CD8-positive, alpha-beta T cell (primary cell): ENCODE measurements at regions of chr21 and their contacts with region 1.

Region 1: GRCh38 chr21:25240974-25241373 is 366.3 kb downstream of the MRPL39 start:
- DNase-seq: no peak
- ATAC-seq: no peak
- H3K4me3 ChIP-seq: no peak overlapping the region
- H3K4me3 Mint-ChIP-seq: no peak overlapping the region
- H3K27ac ChIP-seq: no peak overlapping the region
- H3K27ac Mint-ChIP-seq: no peak overlapping the region
- H3K4me1 ChIP-seq: no peaks in the 10 kb centered on the region
- H3K4me1 Mint-ChIP-seq: no peaks in the 10 kb centered on the region
- H3K27me3 ChIP-seq: no peaks in the 10 kb centered on the region
- H3K27me3 Mint-ChIP-seq: no peaks in the 10 kb centered on the region
- CTCF ChIP-seq: no peak

Region 2: DNA sequence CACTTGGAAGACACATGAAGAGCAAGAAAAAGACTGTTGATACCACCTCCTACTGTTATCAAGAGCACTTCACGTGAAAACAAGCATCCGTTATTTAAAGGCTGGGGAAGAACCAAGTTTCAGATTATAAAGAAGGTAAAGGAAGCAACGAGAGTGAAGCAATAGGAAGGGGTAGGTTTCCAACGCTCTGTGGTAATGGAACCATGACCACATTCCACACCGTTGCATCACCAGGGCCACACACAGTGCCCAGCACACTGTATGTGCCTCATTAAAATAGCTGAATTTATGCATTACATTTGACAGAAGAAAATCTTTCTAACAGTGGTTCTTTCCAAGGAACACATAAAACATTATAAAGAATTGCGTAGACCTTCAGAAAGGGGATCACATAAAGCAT is 69.5 kb before region 1 on chr21:
- CTCF ChIA-PET with region 1: no interaction called
- POLR2A ChIA-PET with region 1: no interaction called
- intact Hi-C with region 1: no loop called
- DNase-seq: no peak
- ATAC-seq: no peak
- H3K4me3 ChIP-seq: no peak overlapping the region
- H3K4me3 Mint-ChIP-seq: no peak overlapping the region
- H3K27ac ChIP-seq: no peak overlapping the region
- H3K27ac Mint-ChIP-seq: no peak overlapping the region
- H3K4me1 ChIP-seq: no peaks in the 10 kb centered on the region
- H3K4me1 Mint-ChIP-seq: no peaks in the 10 kb centered on the region
- H3K27me3 ChIP-seq: no peaks in the 10 kb centered on the region
- H3K27me3 Mint-ChIP-seq: no peaks in the 10 kb centered on the region
- CTCF ChIP-seq: no peak

Region 3: GRCh38 chr21:25220954-25221353 is 20.0 kb before region 1 on chr21:
- CTCF ChIA-PET with region 1: no interaction called
- POLR2A ChIA-PET with region 1: no interaction called
- intact Hi-C with region 1: loop called in 1 of 2 experiments (anchors 2 kb)
- DNase-seq: no peak
- ATAC-seq: no peak
- H3K4me3 ChIP-seq: no peak overlapping the region
- H3K4me3 Mint-ChIP-seq: no peak overlapping the region
- H3K27ac ChIP-seq: no peak overlapping the region
- H3K27ac Mint-ChIP-seq: no peak overlapping the region
- H3K4me1 ChIP-seq: no peaks in the 10 kb centered on the region
- H3K4me1 Mint-ChIP-seq: no peaks in the 10 kb centered on the region
- H3K27me3 ChIP-seq: no peaks in the 10 kb centered on the region
- H3K27me3 Mint-ChIP-seq: no peaks in the 10 kb centered on the region
- CTCF ChIP-seq: no peak